Mammary epithelial cell (primary cell): ENCODE measurements at regions of chr6 and their contacts with region 1.

Region 1: DNA sequence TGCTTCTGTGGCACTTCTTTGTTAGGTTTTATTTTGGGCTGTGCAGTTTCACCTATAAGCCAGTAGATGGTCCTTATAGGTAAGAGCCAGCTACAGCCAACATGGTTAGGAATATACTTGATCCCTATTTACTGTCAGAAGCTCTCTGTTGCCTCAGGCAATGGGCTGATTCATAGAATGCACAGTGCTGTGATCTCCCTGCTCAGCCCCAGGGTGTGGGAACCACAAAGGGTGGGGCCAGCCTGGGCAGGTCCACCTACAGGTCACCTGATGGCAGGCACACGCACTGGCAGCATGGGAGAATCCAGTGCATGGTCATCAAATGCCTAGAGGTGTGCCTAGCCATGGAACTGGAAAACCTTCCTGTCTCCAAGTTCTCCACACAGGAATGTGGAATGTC is 191.9 kb downstream of the MOXD1 start:
- DNase-seq: peak; percentile 95
- H3K4me3 ChIP-seq: no peak overlapping the region
- H3K27ac ChIP-seq: no peak overlapping the region
- H3K4me1 ChIP-seq: peaks cover 12% of the 10 kb centered on the region
- H3K27me3 ChIP-seq: no peaks in the 10 kb centered on the region
- CTCF ChIP-seq: peak; percentile 32 to 35

Region 2: DNA sequence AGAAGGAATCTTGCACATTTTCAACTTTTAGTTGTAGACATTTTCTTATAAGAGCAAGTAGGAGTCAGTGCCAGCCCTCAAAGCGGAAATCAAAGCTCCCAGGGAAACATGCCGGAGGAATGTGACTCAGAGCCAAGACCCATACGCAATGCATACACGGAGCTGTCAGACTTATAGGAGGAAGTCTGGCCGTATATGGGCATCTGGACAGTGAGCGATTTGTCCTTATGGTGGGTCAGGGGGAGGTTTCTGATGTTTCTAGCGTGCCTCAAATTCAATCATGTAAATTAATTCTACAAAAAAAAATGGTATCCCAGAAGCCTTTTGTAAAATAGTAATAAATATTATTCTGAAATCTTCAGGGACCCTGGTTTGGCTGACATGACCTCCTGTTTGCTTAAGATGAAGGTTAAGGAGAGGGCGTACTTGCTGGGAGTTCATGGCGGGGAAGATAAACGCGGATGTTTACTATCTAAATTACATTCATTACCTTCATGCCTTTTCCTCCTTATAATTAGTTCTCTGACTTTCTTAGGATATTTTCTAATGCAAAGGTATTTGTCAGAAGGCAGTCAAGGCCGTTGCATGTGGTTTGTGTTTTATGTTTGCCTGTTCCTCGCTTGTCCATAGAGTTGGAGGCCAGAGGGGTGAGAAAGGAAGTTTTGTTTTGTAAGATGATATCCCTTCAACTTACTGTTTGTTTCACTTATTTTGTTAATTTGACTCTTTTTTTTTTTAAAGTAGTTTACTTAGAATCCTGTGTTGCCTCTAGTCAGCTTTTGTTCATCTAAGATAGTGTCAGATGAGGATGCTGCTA is 254.4 kb before region 1 on chr6:
- CTCF ChIA-PET with region 1: no interaction called
- dilution Hi-C with region 1: no loop called
- in situ Hi-C with region 1: no loop called
- intact Hi-C with region 1: no loop called
- DNase-seq: peak; percentile 76
- H3K4me3 ChIP-seq: no peak overlapping the region
- H3K27ac ChIP-seq: peak overlapping the region; percentile 52
- H3K4me1 ChIP-seq: peaks cover 30% of the 10 kb centered on the region
- H3K27me3 ChIP-seq: no peaks in the 10 kb centered on the region
- CTCF ChIP-seq: no peak

Region 3: DNA sequence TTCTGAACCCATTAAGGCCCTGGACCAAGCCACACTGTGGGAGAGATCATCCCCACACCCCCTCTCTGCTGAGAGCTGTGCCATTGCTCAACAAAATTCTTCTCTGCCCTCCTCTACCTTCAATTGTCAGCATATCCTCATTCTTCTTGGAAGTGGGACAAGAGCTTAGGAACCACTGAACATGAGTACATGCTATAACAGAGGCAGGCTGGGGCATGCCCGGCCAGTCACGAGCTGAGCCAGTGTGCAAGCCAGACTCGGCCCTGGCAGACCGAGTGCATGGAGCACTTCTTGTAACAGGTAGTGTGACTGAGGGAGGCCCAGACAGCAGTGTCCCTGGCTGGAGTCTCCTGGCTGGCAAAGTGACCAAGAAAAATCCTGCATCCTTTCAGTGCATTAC is 42.8 kb after region 1 on chr6:
- CTCF ChIA-PET with region 1: no interaction called
- dilution Hi-C with region 1: no loop called
- in situ Hi-C with region 1: no loop called
- intact Hi-C with region 1: loop called (anchors 2 kb)
- DNase-seq: peak; percentile 77
- H3K4me3 ChIP-seq: no peak overlapping the region
- H3K27ac ChIP-seq: peak overlapping the region; percentile 55
- H3K4me1 ChIP-seq: peaks cover 19% of the 10 kb centered on the region
- H3K27me3 ChIP-seq: no peaks in the 10 kb centered on the region
- CTCF ChIP-seq: no peak